ENCODE measurements at regions of chr14 and their contacts with region 1.

Region 1: DNA sequence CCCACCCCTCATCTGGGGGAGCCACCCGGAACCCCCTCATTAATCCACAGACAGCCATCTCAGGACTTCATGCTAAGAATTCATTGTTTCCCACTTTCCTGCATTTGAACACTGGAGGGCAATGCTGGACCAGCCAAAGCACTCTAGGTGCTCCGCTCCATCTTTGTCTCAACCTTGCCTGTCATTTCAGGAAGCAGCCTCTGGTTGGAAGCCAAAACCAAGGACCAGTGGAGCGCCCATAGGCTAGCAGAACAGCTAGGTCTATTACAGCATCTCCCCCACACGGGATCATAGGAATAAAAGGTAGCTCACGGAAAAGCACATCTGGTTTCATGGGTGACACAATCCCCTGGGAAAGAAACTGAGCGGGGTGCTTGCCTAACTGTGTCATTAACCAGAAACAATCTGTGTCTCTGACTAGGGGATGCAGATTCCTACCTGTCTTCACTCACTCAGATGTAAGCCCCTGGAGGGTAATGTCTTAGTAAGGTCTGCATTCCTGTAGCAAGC is 197.1 kb downstream of the DAD1 start:
- DNase-seq: peak; percentile 57
- ATAC-seq: peak; percentile 86 to 88
- H3K4me3 ChIP-seq: no peak overlapping the region
- H3K27ac ChIP-seq: no peak overlapping the region
- H3K4me1 ChIP-seq: no peaks in the 10 kb centered on the region
- H3K27me3 ChIP-seq: peaks cover 4% of the 10 kb centered on the region
- CTCF ChIP-seq: peak; percentile 66

Region 2: DNA sequence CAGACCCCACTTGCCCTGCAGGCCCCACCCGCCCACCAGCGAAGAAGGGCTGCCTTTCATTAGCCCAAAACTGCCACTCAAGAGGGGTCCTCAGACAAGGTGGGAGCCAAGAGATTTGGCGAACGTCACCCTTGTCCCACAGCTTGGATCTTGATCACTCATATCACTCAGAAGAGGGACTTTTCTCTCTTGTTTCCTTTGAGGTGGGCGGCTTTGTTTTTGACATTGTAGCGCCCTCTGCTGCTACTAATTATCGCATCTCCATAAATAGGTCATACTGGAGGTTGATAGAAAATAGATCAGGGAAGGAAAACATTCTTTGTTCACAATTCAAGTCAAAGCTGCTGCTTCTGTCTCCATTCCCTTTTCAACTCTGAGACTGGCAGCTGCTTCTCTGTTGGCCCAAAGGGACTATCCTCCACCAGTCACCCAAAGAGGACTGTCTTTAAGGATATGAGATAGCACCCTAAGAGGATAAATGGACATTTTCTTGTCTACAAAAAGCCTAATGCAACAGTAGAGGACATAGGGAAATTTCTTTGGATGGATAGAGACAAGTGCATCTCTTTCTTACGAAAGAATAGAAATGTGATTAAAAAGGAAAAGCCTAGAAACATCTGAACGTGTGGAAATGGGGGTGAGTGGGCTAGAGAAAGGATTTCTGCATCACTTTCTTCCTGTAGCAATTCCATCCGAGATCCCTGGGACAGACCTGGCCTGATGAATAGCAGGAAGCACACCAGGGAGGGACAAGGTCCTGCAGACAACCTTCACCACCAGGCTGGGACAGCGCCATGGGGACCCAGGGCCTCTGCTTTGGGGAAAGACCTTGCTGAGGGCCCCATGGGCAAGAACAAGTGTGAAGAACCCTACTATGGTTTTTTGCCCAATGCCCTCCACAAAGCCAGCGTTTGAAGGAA is 81.2 kb after region 1 on chr14:
- intact Hi-C with region 1: loop called (anchors 5 kb)
- DNase-seq: no peak
- ATAC-seq: peak; percentile 70 to 82
- H3K4me3 ChIP-seq: no peak overlapping the region
- H3K27ac ChIP-seq: no peak overlapping the region
- H3K4me1 ChIP-seq: no peaks in the 10 kb centered on the region
- H3K27me3 ChIP-seq: peaks cover 6% of the 10 kb centered on the region
- CTCF ChIP-seq: peak; percentile 64

Measured in lower lobe of right lung (tissue), 2 donors.